Activated naive CD8-positive, alpha-beta T cell treated with anti-CD3 and anti-CD28 coated beads, Interleukin-2, amount 10 ng/mL, durations not matched to agents 7 days and 5 days (primary cell): ENCODE measurements at regions of chr2 and their contacts with region 1.

Region 1: DNA sequence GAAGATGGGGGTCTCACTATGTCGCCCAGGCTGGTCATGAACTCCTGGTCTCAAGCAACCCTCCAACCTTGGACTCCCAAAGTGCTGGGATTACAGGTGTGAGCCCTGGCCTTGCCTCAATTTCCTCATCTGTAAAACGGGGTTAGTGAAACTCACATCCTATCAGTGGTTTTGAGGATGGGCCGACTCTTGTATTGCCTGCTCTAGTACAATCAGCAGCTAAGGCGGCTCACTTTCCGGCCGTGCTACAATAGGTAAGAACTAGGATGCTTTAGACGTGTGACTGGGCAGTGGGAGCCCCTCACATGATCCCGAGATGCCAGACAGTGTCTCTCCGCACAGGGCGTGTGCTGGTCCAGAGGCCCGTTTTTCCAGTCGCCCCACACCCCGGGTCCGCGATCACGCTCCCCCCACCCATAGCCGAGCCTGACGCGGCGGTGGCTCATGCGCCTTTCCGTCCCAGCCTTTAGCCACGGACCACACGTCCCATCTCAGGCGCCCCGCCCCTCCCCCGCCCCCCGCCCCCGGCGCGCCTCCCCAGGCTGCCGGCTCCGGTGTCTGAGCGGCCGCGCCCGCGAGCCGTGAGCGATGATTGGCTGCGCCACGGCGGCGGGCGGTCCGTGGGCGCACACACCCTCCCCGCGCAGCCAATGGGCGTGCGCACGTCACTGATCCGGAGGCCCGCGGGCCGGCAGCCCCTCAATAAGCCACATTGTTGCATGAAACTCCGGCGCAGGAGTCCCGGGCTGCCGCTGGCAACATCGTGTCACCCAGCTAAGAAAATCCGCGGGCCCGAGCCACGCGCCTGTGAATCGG is at the start of gene HK2:
- DNase-seq: peak; percentile 89
- ATAC-seq: peak; percentile 89
- H3K4me3 Mint-ChIP-seq: peak within 1 kb of the TSS; percentile 95
- H3K27ac Mint-ChIP-seq: peak within 1 kb of the TSS; percentile 88
- H3K4me1 Mint-ChIP-seq: peaks cover 43% of the 10 kb centered on the region
- H3K27me3 Mint-ChIP-seq: peaks cover 4% of the 10 kb centered on the region
- total RNA-seq, gene HK2: 39.8 to 40.9 TPM

Region 2: DNA sequence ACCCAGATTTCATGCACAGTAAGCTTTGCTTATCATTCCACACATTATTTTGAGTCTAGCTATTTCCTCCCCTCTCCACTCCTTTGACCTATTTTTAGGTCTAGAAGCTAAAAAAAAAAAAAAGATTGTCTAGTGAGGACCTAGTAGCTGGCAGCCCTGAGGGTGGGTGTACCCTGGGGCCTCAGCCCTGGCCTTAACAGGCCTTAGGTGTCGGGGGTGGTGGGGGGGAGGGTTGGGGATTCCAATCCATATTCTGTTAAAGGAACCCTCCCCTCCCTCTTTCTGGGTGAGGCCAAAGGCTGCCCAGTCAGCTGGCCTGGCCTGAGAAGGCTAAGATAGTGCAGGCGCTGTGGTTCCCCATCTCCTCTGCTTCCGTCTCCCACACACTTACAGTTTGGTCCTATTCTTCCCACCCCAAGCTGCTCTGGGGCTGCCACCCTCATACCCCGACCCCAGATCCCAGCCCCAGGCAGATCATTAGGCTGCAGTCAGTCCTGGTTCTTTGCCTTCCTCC is 65.2 kb before region 1 on chr2:
- POLR2A ChIA-PET with region 1: no interaction called
- DNase-seq: no peak
- ATAC-seq: no peak
- H3K4me3 Mint-ChIP-seq: no peak overlapping the region
- H3K27ac Mint-ChIP-seq: no peak overlapping the region
- H3K4me1 Mint-ChIP-seq: peaks cover 12% of the 10 kb centered on the region
- H3K27me3 Mint-ChIP-seq: peaks cover 10% of the 10 kb centered on the region

Region 3: DNA sequence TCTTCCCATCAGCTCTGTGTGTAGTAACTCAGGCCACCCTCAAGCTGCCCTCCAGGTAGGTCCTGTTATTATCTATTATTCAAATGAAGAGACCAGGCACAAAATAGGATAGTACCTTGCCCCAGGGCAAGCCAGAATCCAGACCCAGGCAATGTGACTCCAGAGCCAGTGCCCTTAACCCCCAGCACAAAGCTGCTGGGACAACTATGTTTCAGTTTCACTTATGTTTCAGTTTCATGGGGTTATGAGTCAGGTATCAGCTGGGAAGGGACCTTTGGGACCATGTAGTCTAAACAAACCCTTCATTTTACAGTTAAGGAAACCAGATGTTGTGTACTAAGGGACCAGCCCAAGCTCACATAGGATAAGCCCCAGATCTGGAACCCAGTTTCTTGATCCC is 10.3 kb after region 1 on chr2:
- POLR2A ChIA-PET with region 1: interaction called, 26 read pairs
- DNase-seq: no peak
- ATAC-seq: peak; percentile 80
- H3K4me3 Mint-ChIP-seq: peak overlapping the region; percentile 66
- H3K27ac Mint-ChIP-seq: peak overlapping the region; percentile 88
- H3K4me1 Mint-ChIP-seq: peaks cover 83% of the 10 kb centered on the region
- H3K27me3 Mint-ChIP-seq: no peaks in the 10 kb centered on the region

Region 4: GRCh38 chr2:74849228-74849892 is 15.7 kb after region 1 on chr2:
- POLR2A ChIA-PET with region 1: interaction called, 26 read pairs
- DNase-seq: peak; percentile 49
- ATAC-seq: peak; percentile 78
- H3K4me3 Mint-ChIP-seq: peak overlapping the region; percentile 81
- H3K27ac Mint-ChIP-seq: peak overlapping the region; percentile 95
- H3K4me1 Mint-ChIP-seq: peaks cover 69% of the 10 kb centered on the region
- H3K27me3 Mint-ChIP-seq: no peaks in the 10 kb centered on the region